ENCODE measurements at regions of chr1 and their contacts with region 1.

Region 1: DNA sequence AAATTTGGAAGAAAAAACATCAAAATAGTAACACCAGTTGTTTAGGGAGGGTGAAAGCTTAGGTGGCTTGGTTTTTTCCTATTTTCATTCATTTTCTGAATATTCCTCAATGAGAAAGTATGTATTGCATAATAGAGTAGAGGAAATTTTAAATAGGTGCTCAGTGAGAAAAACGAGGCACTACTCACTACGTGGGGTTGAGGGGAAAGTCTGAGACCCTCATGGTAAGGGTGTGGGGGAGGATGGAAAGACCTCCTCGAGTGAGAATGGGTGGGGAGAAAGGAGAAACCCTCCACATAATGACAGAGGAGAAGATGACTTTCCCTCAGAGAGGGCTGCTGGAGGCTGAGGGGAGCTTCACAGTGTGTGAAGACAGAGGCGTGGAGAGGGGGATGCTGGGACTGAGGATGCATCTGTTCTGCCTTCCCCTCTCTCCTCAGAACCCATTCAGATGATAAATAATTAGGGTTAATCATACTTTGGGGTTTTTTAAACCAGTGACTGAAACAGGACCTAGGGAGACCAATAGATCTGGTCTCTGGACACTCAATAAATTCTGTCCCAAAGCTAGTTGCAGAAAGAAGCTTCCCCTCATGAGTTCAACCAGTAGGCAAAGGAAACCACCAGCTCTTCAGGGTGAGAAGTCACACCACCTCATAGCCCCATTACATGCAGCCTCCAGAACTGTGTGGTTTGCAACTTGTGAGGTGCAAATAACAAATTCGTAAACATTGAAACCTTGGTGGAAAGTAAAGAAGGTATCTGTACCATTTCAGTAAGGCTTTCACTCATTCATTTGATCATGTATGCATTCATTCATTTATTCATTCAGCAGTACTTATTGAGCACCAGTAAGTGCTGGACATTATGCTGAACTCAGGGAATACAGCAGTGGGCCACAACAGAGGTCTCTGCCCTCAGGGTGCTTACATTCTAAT is 17.1 kb downstream of the SLAMF7 start:
- DNase-seq: no peak
- ATAC-seq: peak; percentile 77
- H3K4me3 ChIP-seq: no peak overlapping the region
- H3K27ac ChIP-seq: peak overlapping the region; percentile 49
- H3K4me1 ChIP-seq: peaks cover 20% of the 10 kb centered on the region
- H3K27me3 ChIP-seq: no peaks in the 10 kb centered on the region
- CTCF ChIP-seq: no peak
- EP300 ChIP-seq: peak; percentile 32 to 43; a peak in 1 of 4 replicates
- POLR2A ChIP-seq: peak; percentile 44; the same call in 1 of the 2 replicates
- RAD21 ChIP-seq: no peak

Region 2: GRCh38 chr1:160726498-160727315 is 29.5 kb before region 1 on chr1:
- CTCF ChIA-PET with region 1: interaction called, 4 read pairs
- POLR2A ChIA-PET with region 1: interaction called, 4 read pairs
- RAD21 ChIA-PET with region 1: interaction called, 12 read pairs
- SMC1A ChIA-PET with region 1: interaction called, 32 read pairs
- in situ Hi-C with region 1: no loop called
- intact Hi-C with region 1: no loop called
- DNase-seq: no peak
- ATAC-seq: peak; percentile 80
- H3K4me3 ChIP-seq: no peak overlapping the region
- H3K27ac ChIP-seq: peak overlapping the region; percentile 85
- H3K4me1 ChIP-seq: peaks cover 40% of the 10 kb centered on the region
- H3K27me3 ChIP-seq: no peaks in the 10 kb centered on the region
- CTCF ChIP-seq: peak; percentile 81 to 92 (median 91); a peak in 5 of 6 replicates
- EP300 ChIP-seq: no peak
- POLR2A ChIP-seq: no peak
- RAD21 ChIP-seq: peak; percentile 99

Region 3: GRCh38 chr1:160731990-160732389 is 24.2 kb before region 1 on chr1:
- CTCF ChIA-PET with region 1: interaction called, 4 read pairs
- POLR2A ChIA-PET with region 1: interaction called, 6 read pairs
- RAD21 ChIA-PET with region 1: interaction called, 12 read pairs
- SMC1A ChIA-PET with region 1: interaction called, 32 read pairs
- in situ Hi-C with region 1: no loop called
- intact Hi-C with region 1: no loop called
- DNase-seq: no peak
- ATAC-seq: peak; percentile 63
- H3K4me3 ChIP-seq: peak overlapping the region; percentile 4; the same call in 1 of the 2 replicates
- H3K27ac ChIP-seq: peak overlapping the region; percentile 74
- H3K4me1 ChIP-seq: peaks cover 40% of the 10 kb centered on the region
- H3K27me3 ChIP-seq: no peaks in the 10 kb centered on the region
- CTCF ChIP-seq: no peak
- EP300 ChIP-seq: no peak
- POLR2A ChIP-seq: no peak
- RAD21 ChIP-seq: no peak

Measured in GM12878 (cell line).